B cell (primary cell): ENCODE measurements at regions of chr11 and their contacts with region 1.

Region 1: GRCh38 chr11:95595973-95596489 is 193.6 kb downstream of the FAM76B start:
- DNase-seq: no peak
- ATAC-seq: no peak
- H3K4me3 ChIP-seq: no peak overlapping the region
- H3K4me3 Mint-ChIP-seq: no peak overlapping the region
- H3K27ac ChIP-seq: no peak overlapping the region
- H3K27ac Mint-ChIP-seq: peak overlapping the region; percentile 10
- H3K4me1 ChIP-seq: no peaks in the 10 kb centered on the region
- H3K4me1 Mint-ChIP-seq: no peaks in the 10 kb centered on the region
- H3K27me3 ChIP-seq: no peaks in the 10 kb centered on the region
- H3K27me3 Mint-ChIP-seq: no peaks in the 10 kb centered on the region
- CTCF ChIP-seq: no peak

Region 2: GRCh38 chr11:95625164-95625900 is 29.3 kb after region 1 on chr11:
- CTCF ChIA-PET with region 1: no interaction called
- POLR2A ChIA-PET with region 1: interaction called, 11 read pairs
- intact Hi-C with region 1: no loop called
- DNase-seq: no peak
- ATAC-seq: no peak
- H3K4me3 ChIP-seq: no peak overlapping the region
- H3K4me3 Mint-ChIP-seq: no peak overlapping the region
- H3K27ac ChIP-seq: no peak overlapping the region
- H3K27ac Mint-ChIP-seq: no peak overlapping the region
- H3K4me1 ChIP-seq: no peaks in the 10 kb centered on the region
- H3K4me1 Mint-ChIP-seq: no peaks in the 10 kb centered on the region
- H3K27me3 ChIP-seq: no peaks in the 10 kb centered on the region
- H3K27me3 Mint-ChIP-seq: no peaks in the 10 kb centered on the region
- CTCF ChIP-seq: no peak

Region 3: DNA sequence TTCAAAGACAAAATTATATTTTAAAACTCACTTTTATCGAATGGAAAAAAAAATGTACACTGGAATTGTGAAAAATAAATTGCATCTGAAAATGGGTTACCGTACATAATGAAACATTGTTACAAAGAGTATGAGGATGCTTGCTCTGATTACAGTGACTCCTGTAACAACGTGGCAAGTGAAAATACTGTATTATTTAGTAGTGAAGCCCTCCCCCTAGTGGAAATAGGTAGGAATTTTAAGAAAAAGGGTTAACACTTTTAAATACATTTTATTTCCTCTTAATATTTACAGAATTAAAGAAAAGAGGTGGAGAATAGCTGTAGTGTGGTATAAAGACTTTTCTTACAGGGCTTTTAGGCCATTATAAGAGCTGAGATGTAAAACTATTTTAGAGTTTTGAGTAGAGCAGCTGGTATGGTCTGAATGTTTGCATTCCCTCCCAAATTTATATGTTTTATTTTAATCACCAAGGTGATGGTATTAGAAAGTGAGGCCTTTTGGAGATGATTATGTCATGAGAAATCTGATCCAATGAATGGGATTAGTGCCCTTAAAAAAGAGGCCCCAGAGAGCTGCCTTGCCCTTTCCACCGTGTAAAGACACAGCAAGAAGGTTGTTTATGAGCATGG is 168.4 kb after region 1 on chr11:
- CTCF ChIA-PET with region 1: interaction called, 3 read pairs
- POLR2A ChIA-PET with region 1: no interaction called
- intact Hi-C with region 1: loop called (anchors 10 kb)
- DNase-seq: peak; percentile 78
- ATAC-seq: peak; percentile 92
- H3K4me3 ChIP-seq: no peak overlapping the region
- H3K4me3 Mint-ChIP-seq: no peak overlapping the region
- H3K27ac ChIP-seq: no peak overlapping the region
- H3K27ac Mint-ChIP-seq: no peak overlapping the region
- H3K4me1 ChIP-seq: peaks cover 7% of the 10 kb centered on the region in 2 donors
- H3K4me1 Mint-ChIP-seq: peaks cover 24% of the 10 kb centered on the region
- H3K27me3 ChIP-seq: no peaks in the 10 kb centered on the region
- H3K27me3 Mint-ChIP-seq: no peaks in the 10 kb centered on the region
- CTCF ChIP-seq: peak; percentile 92